SK-N-SH (cell line): ENCODE measurements at regions of chr5 and their contacts with region 1.

Region 1: DNA sequence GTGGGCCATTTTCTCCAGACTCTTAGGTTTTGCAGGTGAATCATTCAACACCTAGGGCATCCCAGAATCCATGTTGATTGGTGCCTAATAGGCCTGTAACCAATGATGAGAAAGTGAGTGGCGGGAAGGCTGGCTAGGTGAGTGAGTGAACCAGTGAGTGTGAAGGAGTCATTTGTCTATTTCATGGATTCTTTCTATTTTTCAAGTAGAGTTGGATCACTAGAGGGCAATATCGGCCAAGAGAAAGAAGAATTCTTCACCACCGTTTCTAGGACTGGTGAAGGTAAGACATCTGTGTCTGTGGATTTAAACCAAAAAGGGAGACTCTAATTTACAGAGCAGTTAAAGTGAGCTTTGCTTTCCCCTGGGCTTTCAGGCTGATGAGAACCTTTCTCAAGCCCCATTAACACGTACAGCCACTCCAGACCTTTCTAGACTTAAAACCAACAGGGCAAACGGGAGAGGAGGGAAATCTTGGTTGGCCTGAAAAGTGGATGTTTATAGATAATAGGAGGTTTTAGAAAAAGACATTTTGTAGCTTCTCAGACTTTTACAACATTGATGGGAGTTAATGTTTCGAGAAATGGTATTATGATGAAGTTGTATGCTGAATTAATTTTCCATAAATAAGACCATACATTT is 114.3 kb upstream of the IL12B start:
- DNase-seq: peak; percentile 44
- H3K4me3 ChIP-seq: no peak overlapping the region; a peak in 1 of 4 replicates
- H3K27ac ChIP-seq: no peak overlapping the region
- H3K4me1 ChIP-seq: no peaks in the 10 kb centered on the region
- H3K27me3 ChIP-seq: no peaks in the 10 kb centered on the region
- CTCF ChIP-seq: peak; percentile 68
- EP300 ChIP-seq: no peak
- RAD21 ChIP-seq: peak; percentile 88

Region 2: GRCh38 chr5:159430361-159431012 is 14.1 kb before region 1 on chr5:
- CTCF ChIA-PET with region 1: interaction called, 10 read pairs
- POLR2A ChIA-PET with region 1: no interaction called
- DNase-seq: no peak
- H3K4me3 ChIP-seq: no peak overlapping the region
- H3K27ac ChIP-seq: no peak overlapping the region
- H3K4me1 ChIP-seq: no peaks in the 10 kb centered on the region
- H3K27me3 ChIP-seq: no peaks in the 10 kb centered on the region; the same call in 1 of the 2 replicates
- CTCF ChIP-seq: no peak
- EP300 ChIP-seq: no peak
- RAD21 ChIP-seq: no peak